ENCODE measurements at regions of chr15 and their contacts with region 1.

Region 1: GRCh38 chr15:75639709-75640482 is at the start of gene IMP3:
- DNase-seq: peak; percentile 95
- ATAC-seq: peak; percentile 95
- H3K4me3 ChIP-seq: peak within 1 kb of the TSS; percentile 76
- H3K27ac ChIP-seq: peak within 1 kb of the TSS; percentile 75
- H3K4me1 ChIP-seq: no peaks in the 10 kb centered on the region
- H3K27me3 ChIP-seq: no peaks in the 10 kb centered on the region
- CTCF ChIP-seq: no peak
- EP300 ChIP-seq: peak in 1 of 2 experiments; percentile 19; a peak in 1 of 4 replicates
- POLR2A ChIP-seq: peak; percentile 99
- RAD21 ChIP-seq: no peak
- polyA plus RNA-seq, gene IMP3: 13.3 to 34.9 TPM

Region 2: GRCh38 chr15:74937596-74938296 is 702.1 kb before region 1 on chr15 and contains the start of gene COX5A:
- CTCF ChIA-PET with region 1: no interaction called
- POLR2A ChIA-PET with region 1: no interaction called
- RAD21 ChIA-PET with region 1: no interaction called
- SMC1A ChIA-PET with region 1: no interaction called
- in situ Hi-C with region 1: no loop called
- intact Hi-C with region 1: loop called (anchors 10 kb)
- DNase-seq: peak; percentile 75
- ATAC-seq: peak; percentile 95
- H3K4me3 ChIP-seq: peak within 1 kb of the TSS; percentile 83
- H3K27ac ChIP-seq: peak within 1 kb of the TSS; percentile 91
- H3K4me1 ChIP-seq: peaks cover 4% of the 10 kb centered on the region
- H3K27me3 ChIP-seq: no peaks in the 10 kb centered on the region
- CTCF ChIP-seq: no peak
- EP300 ChIP-seq: no peak
- POLR2A ChIP-seq: peak; percentile 97
- RAD21 ChIP-seq: no peak
- polyA plus RNA-seq, gene COX5A: 84.5 to 350 TPM

Region 3: DNA sequence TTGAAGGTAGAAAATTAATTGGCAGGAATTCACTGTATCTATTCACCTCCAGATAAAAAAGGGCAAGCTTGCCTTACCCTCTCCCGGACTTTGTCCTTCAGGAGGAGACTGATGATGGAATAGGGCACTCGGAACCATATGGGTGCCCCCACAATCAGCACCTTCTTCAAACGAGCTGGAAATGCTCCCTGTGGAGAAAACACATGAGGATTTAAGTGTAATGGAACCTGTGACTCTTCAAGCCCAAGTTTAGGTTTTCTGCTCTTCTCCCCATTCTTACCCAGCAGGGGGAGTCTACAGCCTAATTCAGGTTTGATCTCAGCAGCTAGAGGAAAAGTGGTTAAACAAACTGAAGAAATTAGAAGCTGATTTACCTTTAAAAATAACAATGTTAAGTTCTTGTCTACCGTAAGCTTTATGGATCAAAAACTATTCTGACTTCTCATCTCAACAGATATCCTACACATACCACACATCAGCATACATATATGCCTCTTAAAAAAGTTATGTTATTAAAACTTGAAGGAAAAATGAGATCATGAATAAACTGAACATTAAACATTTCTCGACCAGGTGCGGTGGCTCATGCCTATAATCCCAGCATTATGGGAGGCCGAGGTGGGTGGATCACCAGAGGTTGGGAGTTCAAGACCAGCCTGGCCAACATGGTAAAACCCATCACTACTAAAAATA is 130.9 kb before region 1 on chr15:
- CTCF ChIA-PET with region 1: interaction called, 20 read pairs
- POLR2A ChIA-PET with region 1: interaction called, 3 read pairs
- RAD21 ChIA-PET with region 1: interaction called, 11 read pairs
- SMC1A ChIA-PET with region 1: interaction called, 15 read pairs
- in situ Hi-C with region 1: no loop called
- intact Hi-C with region 1: loop called (anchors 5 kb)
- DNase-seq: no peak
- ATAC-seq: 0 out of 3 replicates have a peak, but pooled peaks have one; percentile 31
- H3K4me3 ChIP-seq: no peak overlapping the region
- H3K27ac ChIP-seq: no peak overlapping the region
- H3K4me1 ChIP-seq: no peaks in the 10 kb centered on the region
- H3K27me3 ChIP-seq: no peaks in the 10 kb centered on the region
- CTCF ChIP-seq: peak; percentile 50 to 54 (median 52); a peak in 5 of 6 replicates
- EP300 ChIP-seq: no peak
- POLR2A ChIP-seq: no peak
- RAD21 ChIP-seq: peak; percentile 64

Region 4: DNA sequence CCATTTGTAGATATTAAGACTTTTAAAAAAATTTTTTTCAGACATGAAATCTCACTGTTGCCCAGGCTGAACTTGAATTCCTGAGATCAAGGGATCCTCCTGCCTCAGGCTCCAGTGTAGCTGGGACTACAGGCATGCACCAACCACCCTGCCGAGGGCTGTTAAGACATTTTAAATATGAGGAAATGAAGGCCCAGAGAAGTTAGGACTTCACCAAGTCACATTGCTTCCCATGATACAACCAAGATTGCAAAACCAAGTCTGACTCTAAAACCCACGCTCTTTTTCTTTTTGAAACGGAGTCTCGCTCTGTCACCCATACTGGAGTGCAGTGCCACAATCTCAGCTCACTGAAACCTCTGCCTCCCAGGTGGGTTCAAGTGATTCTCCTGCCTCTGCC is 88.8 kb before region 1 on chr15:
- CTCF ChIA-PET with region 1: no interaction called
- POLR2A ChIA-PET with region 1: no interaction called
- RAD21 ChIA-PET with region 1: no interaction called
- SMC1A ChIA-PET with region 1: no interaction called
- in situ Hi-C with region 1: no loop called
- intact Hi-C with region 1: no loop called
- DNase-seq: no peak
- ATAC-seq: no peak
- H3K4me3 ChIP-seq: no peak overlapping the region
- H3K27ac ChIP-seq: no peak overlapping the region
- H3K4me1 ChIP-seq: no peaks in the 10 kb centered on the region
- H3K27me3 ChIP-seq: no peaks in the 10 kb centered on the region
- CTCF ChIP-seq: no peak
- EP300 ChIP-seq: no peak
- POLR2A ChIP-seq: no peak
- RAD21 ChIP-seq: no peak

Region 5: DNA sequence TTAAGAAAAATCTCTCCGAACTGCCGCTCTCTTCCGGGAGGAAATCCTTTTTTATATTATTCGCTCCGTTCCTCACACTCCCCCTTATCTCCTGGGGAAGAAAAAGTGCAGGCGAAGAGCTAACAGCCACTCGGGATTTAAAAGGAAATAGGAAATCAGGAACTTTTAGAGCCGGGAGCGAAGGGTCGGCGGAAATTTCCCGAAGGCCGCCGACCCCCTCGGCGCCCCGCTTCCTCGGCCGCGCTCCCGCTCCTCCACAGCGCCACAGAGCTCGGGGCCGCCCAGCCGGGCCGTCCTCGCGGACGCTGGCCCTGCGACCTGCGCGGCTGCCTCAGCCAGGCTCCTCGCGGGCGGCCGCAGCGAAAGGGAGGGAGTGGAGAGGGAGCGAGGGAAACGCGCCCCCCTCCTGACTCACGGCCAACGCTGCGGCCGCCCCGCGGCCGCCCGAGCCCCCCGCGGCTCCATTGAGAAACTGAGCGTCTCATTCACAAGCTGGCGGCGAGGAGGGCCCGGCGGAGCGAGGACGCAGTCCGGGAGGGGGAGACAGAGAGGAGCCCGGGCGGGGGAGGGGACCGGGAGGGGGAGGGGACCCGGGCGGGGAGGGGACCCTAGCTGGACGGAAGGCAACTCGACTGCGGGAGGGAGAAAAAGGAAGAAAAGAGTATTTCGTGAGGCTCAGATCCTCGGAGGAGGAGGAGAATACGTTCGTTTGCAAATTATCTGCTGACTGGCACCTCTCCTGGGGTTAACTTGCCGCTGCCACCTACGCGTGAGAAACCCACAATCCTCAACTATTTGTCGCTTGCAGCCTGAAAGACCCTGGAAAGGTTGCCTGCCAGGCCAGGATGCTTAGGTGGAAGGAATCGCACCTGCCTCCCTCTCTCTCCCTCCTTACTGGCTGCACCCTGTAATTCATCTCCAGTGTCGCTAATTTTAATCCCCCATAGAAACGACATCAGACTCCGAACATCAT is 60.7 kb before region 1 on chr15 and contains the start of gene PTPN9:
- CTCF ChIA-PET with region 1: interaction called, 3 read pairs
- POLR2A ChIA-PET with region 1: interaction called, 10 read pairs
- RAD21 ChIA-PET with region 1: interaction called, 4 read pairs
- SMC1A ChIA-PET with region 1: no interaction called
- in situ Hi-C with region 1: no loop called
- intact Hi-C with region 1: no loop called
- DNase-seq: no peak
- ATAC-seq: peak; percentile 84
- H3K4me3 ChIP-seq: peak within 1 kb of the TSS; percentile 86
- H3K27ac ChIP-seq: peak within 1 kb of the TSS; percentile 79
- H3K4me1 ChIP-seq: peaks cover 3% of the 10 kb centered on the region; the same call in 1 of the 2 replicates
- H3K27me3 ChIP-seq: no peaks in the 10 kb centered on the region
- CTCF ChIP-seq: peak; percentile 23 to 46 (median 33); a peak in 5 of 6 replicates
- EP300 ChIP-seq: no peak
- POLR2A ChIP-seq: peak; percentile 76
- RAD21 ChIP-seq: no peak
- polyA plus RNA-seq, gene PTPN9: 7.8 to 8.9 TPM

Region 6: DNA sequence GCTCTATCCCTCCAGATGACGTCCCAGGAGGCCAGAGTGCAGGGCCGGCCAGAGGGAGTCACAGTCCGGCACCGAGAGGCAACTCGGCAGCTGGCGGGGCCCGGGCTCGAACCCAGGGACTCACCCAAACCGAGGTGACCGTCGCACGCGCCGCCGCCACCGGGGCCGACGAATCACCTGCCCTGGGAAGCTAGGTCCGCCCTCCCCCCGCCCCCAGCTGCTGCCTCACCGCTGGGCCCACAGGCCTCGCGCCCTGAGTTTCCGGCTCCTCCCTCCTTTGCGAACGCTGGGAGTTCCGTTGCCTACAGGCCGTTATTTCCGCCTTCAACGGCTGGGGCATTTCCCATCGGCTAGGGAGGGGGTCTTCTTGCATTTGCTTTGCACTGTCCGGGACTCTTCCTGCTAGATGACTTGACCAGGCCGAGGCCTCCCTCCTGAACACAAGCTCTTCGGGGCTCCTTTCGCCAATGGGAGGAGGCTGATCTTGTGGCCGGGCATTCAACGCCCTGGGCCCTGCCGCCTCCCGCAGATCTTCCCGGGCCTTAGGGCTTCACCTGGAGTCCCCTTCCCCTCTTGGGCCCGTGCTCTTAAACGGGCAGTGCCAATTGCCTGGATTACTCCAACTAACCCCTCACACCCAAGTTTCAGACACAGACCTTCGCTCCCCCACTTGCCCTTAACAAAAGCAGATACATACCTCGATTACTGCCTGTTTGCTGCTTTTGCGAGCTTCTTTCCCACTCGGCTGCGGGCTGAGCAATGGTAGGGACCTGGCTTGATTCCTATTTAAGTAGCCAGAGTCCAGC is 14.2 kb before region 1 on chr15 and contains the start of gene SNUPN:
- CTCF ChIA-PET with region 1: interaction called, 39 read pairs
- POLR2A ChIA-PET with region 1: interaction called, 40 read pairs
- RAD21 ChIA-PET with region 1: interaction called, 23 read pairs
- SMC1A ChIA-PET with region 1: interaction called, 21 read pairs
- in situ Hi-C with region 1: no loop called
- intact Hi-C with region 1: loop called (anchors 1 kb)
- DNase-seq: peak; percentile 87
- ATAC-seq: peak; percentile 91
- H3K4me3 ChIP-seq: peak within 1 kb of the TSS; percentile 81
- H3K27ac ChIP-seq: peak within 1 kb of the TSS; percentile 98
- H3K4me1 ChIP-seq: peaks cover 6% of the 10 kb centered on the region
- H3K27me3 ChIP-seq: no peaks in the 10 kb centered on the region
- CTCF ChIP-seq: no peak
- EP300 ChIP-seq: 0 out of 4 replicates have a peak, but pooled peaks of 1 of the 2 experiments have one; percentile 37
- POLR2A ChIP-seq: peak; percentile 87
- RAD21 ChIP-seq: no peak
- polyA plus RNA-seq, gene SNUPN: 47.3 to 50.3 TPM

Region 7: DNA sequence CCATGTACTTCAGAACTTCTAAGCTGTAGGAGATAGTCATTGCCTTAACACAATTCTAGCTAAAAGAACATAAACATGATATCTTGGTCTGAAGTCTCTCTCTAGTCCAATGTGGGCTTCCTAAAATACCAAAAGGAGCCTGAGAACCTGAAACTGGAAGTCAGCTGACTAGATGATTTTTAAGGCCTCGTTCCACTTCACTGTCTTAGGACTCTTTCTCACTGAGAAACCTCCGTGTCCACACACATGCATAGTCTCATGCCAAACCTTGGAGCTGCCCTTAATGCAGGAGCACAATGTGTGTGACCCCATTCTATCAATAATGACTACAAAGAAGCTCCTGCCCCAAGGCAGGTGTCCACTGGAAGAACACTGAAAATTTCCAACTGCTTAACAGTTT is 583.6 kb after region 1 on chr15:
- CTCF ChIA-PET with region 1: no interaction called
- POLR2A ChIA-PET with region 1: no interaction called
- RAD21 ChIA-PET with region 1: no interaction called
- SMC1A ChIA-PET with region 1: no interaction called
- in situ Hi-C with region 1: no loop called
- intact Hi-C with region 1: no loop called
- DNase-seq: peak; percentile 64
- ATAC-seq: peak; percentile 78
- H3K4me3 ChIP-seq: no peak overlapping the region
- H3K27ac ChIP-seq: peak overlapping the region; percentile 79
- H3K4me1 ChIP-seq: peaks cover 12% of the 10 kb centered on the region
- H3K27me3 ChIP-seq: no peaks in the 10 kb centered on the region
- CTCF ChIP-seq: no peak
- EP300 ChIP-seq: no peak
- POLR2A ChIP-seq: no peak
- RAD21 ChIP-seq: no peak

Measured in GM12878 (cell line).